ENCODE measurements at regions of chr2 and their contacts with region 1.

Region 1: DNA sequence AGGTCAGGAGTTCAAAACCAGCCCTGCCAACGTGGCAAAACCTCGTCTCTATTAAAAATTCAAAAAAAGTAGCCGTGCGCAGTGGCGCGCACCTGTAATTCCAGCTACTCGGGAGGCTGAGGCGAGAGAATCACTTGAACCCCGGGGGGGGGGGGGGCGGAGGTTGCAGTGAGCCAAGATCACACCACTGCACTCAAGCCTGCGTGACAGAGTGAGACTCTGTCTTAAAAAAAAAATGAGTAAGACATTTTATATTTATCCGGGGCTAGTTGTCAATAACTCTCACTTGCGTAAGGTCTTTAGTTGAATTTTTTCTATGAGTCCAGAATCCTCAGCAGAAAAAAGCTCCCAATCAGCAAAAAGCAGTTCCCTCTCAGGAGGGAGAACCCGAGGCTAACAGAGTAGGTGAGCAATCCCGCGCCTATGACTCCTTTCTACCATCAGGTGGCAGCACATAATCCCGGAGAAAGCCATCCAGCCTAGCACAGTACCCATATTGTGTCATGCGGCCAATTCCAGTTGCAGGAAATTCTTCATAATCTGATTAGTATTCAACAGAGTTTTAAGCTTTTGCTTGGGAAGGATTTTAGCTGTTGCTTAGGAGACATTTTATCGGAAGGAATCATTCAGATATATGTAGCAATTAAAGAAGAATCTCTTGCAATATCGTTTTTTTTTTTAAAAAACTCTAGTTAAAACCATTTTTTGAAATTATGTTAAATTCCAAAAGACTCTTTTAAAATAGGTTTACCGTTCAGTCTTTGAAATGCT is 11.9 kb upstream of the CRYGA start:
- DNase-seq: peak; percentile 64 to 71
- ATAC-seq: peak; percentile 99

Region 2: DNA sequence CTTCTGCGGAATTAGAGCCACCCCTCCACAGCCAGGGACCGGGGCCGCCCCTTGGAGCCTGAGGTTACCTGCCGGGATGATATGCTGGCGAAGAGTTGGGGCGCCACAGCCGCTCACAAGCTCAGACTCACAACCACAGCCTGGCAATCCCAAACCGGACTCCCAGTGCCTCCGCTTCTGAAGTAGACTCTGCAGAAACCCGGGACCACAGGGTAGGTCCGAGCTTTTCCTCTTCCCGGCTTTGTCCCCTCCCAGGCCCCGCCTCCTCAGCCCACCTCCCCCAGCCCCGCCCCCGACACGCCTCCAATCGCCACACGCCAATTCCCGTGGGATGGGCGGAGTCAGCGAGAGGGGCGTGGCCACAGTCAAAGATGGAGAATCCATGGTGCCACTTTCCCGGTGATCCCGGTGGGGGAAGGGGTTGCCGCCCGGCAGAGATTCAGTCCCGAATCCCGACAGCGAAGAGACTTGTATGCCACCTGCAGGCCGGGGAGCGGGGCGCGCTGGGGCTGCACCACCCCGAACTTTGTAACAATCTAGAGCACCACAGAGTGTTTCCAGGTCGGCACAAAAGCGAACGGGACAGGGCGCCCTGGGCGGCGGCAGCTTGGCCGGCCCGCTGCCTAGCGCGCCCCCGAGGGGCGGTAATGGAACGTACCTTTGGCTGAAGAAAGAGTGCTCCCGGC is 79.8 kb after region 1 on chr2 and contains the start of gene IDH1:
- intact Hi-C with region 1: loop called in 1 of 2 experiments (anchors 5 kb)
- DNase-seq: peak; percentile 95 to 100
- ATAC-seq: peak; percentile 90
- total RNA-seq, gene IDH1: 228 to 238 TPM

Region 3: DNA sequence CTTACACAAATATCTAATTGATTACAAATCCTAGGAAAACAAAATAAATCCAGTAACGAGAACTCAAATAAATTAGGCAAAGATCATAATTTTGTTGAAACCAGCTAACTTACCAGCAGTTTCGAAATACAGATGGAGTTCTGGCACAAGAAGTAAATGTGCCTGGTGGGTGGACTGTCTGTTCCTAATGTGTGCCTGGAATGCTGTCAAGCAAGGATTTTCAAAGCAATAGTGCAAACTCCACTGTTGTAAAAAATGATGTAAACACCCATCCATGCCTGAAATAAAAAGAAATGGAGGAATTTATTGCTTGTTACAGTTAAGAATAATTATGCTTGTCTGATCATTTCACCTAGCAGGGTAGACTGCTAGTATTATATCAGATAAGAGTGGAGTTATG is 824.7 kb after region 1 on chr2:
- intact Hi-C with region 1: no loop called
- DNase-seq: no peak
- ATAC-seq: peak; percentile 49